GM12878 (cell line): ENCODE measurements at regions of chr1 and their contacts with region 1.

Region 1: DNA sequence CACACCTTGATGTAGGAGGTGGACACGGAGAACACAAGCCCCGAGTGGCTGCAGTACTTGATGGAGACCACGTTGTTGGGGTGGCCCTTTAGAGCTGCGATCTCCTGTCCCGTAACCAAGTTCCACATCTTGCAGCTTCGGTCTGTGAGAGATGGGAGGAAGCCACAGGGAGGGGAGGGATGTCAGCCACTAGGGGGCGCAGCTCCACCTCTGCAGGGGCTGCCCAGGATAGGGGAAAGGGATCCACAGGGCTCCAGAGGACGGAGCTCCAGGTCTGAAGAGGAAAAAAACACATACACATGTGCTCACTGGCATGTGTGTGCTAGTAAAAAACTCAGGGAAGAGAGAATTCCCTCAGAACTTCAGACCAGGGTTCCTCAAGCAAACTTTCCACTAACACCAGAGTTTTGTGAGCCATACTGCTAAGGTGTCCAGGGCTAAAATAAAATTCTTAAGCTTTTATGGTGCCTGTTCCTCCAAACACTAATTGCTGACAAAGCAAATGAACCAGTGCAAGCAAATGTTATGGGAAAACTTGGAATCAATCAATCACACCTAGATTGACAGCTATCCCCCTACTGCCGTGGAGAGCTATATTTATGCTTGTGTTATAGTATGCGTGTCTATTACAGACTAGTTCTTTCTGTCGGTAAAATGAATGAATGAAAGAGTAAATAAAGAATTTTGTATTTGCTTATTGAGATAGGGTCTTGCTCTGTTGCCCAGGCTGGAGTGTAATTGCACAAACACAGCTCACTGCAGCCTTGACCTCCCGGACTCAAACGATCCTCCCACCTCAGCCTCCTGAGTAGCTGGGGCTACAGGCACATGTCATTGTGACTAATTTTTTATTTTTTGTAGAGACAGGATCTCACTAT is 43.7 kb downstream of the KIF21B start:
- DNase-seq: no peak
- ATAC-seq: peak; percentile 89
- H3K4me3 ChIP-seq: no peak overlapping the region
- H3K27ac ChIP-seq: no peak overlapping the region
- H3K4me1 ChIP-seq: no peaks in the 10 kb centered on the region
- H3K27me3 ChIP-seq: no peaks in the 10 kb centered on the region
- CTCF ChIP-seq: peak; percentile 53 to 81 (median 79)
- EP300 ChIP-seq: no peak
- POLR2A ChIP-seq: no peak
- RAD21 ChIP-seq: peak; percentile 71

Region 2: GRCh38 chr1:200992382-200993048 is 12.7 kb after region 1 on chr1:
- CTCF ChIA-PET with region 1: interaction called, 14 read pairs
- POLR2A ChIA-PET with region 1: no interaction called
- RAD21 ChIA-PET with region 1: interaction called, 5 read pairs
- SMC1A ChIA-PET with region 1: interaction called, 3 read pairs
- in situ Hi-C with region 1: no loop called
- intact Hi-C with region 1: no loop called
- DNase-seq: no peak
- ATAC-seq: no peak
- H3K4me3 ChIP-seq: no peak overlapping the region
- H3K27ac ChIP-seq: no peak overlapping the region
- H3K4me1 ChIP-seq: no peaks in the 10 kb centered on the region
- H3K27me3 ChIP-seq: no peaks in the 10 kb centered on the region
- CTCF ChIP-seq: no peak
- EP300 ChIP-seq: no peak
- POLR2A ChIP-seq: no peak
- RAD21 ChIP-seq: no peak

Region 3: GRCh38 chr1:201016211-201016651 is 36.4 kb after region 1 on chr1:
- CTCF ChIA-PET with region 1: interaction called, 48 read pairs
- POLR2A ChIA-PET with region 1: no interaction called
- RAD21 ChIA-PET with region 1: interaction called, 239 read pairs
- SMC1A ChIA-PET with region 1: interaction called, 12 read pairs
- in situ Hi-C with region 1: no loop called
- intact Hi-C with region 1: no loop called
- DNase-seq: no peak
- ATAC-seq: no peak
- H3K4me3 ChIP-seq: no peak overlapping the region
- H3K27ac ChIP-seq: no peak overlapping the region
- H3K4me1 ChIP-seq: peaks cover 51% of the 10 kb centered on the region
- H3K27me3 ChIP-seq: no peaks in the 10 kb centered on the region
- CTCF ChIP-seq: no peak
- EP300 ChIP-seq: no peak
- POLR2A ChIP-seq: no peak
- RAD21 ChIP-seq: no peak

Region 4: DNA sequence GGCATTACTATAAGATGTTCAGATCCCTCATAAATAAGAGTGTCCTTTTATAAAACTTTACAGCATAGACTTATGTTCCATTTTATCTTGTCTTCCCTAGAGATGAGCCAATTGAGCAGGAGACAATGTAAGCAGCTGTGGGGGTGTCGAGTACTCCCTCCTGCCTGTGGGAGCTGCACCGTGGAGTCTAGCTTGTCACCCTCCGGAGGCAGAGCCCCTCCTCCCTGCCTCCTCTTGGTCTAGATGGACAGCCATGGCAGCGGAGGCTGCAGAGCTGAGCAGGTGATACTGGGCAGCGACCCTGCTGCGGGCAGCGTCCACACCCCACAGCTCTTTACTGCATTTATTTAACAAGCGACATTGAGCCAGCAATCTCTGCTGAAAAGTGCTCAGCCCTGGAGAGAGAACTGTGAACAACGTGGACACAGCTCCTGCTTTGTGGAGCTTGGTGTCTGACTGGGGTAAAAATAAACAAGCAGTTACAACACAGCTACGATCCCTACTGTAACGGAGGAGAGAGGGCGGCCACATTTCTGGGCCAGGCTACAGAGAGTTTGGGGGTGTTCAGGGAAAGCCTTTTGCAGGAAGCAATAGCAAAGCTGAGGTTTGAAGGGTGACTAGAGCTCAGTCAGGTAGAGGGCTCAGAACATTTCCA is 56.5 kb after region 1 on chr1:
- CTCF ChIA-PET with region 1: interaction called, 74 read pairs
- POLR2A ChIA-PET with region 1: no interaction called
- RAD21 ChIA-PET with region 1: interaction called, 19 read pairs
- SMC1A ChIA-PET with region 1: interaction called, 44 read pairs
- in situ Hi-C with region 1: loop called (anchors 5 kb)
- intact Hi-C with region 1: no loop called
- DNase-seq: no peak
- ATAC-seq: no peak
- H3K4me3 ChIP-seq: no peak overlapping the region
- H3K27ac ChIP-seq: no peak overlapping the region
- H3K4me1 ChIP-seq: no peaks in the 10 kb centered on the region
- H3K27me3 ChIP-seq: no peaks in the 10 kb centered on the region
- CTCF ChIP-seq: no peak
- EP300 ChIP-seq: no peak
- POLR2A ChIP-seq: no peak
- RAD21 ChIP-seq: no peak

Region 5: GRCh38 chr1:201042779-201043461 is 63.1 kb after region 1 on chr1:
- CTCF ChIA-PET with region 1: interaction called, 74 read pairs
- POLR2A ChIA-PET with region 1: interaction called, 9 read pairs
- RAD21 ChIA-PET with region 1: interaction called, 19 read pairs
- SMC1A ChIA-PET with region 1: interaction called, 44 read pairs
- in situ Hi-C with region 1: loop called (anchors 5 kb)
- intact Hi-C with region 1: loop called (anchors 1 kb)
- DNase-seq: no peak
- ATAC-seq: peak; percentile 97
- H3K4me3 ChIP-seq: no peak overlapping the region
- H3K27ac ChIP-seq: no peak overlapping the region
- H3K4me1 ChIP-seq: no peaks in the 10 kb centered on the region
- H3K27me3 ChIP-seq: no peaks in the 10 kb centered on the region; a peak in 1 of 4 replicates
- CTCF ChIP-seq: peak; percentile 87 to 94 (median 93); a peak in 5 of 6 replicates
- EP300 ChIP-seq: no peak
- POLR2A ChIP-seq: no peak
- RAD21 ChIP-seq: peak; percentile 99

Region 6: DNA sequence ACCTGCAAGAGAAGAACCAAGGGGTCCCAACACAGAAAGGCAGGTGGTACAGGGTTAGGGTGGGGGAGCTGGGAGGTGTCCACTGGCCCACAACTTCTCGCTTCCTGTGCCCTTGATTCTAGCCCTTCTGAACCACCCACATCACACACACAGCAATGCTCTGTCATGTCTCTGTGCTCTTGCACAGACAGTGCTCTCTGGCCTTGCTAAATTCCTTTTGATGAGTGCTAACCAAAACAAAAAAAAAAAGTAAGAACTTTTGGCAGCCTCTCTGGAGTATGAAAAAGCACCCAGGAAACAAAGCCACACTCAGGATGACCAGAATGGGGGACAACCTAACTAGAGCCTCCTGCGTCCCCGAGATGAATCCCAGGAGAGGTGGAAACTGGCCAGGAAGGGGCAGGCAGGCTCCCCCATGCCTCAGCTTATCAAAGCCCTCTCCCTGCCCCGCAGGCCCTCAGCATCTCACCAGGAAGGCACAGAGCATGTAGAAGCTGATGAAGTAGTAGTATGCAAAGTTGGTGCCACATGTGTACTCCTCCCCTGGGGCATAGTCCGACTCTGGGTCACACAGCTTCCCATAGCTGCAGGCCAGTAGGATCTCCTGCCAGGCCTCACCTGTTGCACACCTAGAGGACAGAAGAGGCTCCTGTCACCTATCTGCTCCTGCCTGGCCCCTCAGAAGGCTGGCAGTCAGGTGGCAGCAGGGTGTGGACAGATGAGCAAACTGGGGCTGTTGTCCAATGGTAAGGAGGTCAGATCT is 70.9 kb after region 1 on chr1:
- CTCF ChIA-PET with region 1: interaction called, 19 read pairs
- POLR2A ChIA-PET with region 1: interaction called, 9 read pairs
- RAD21 ChIA-PET with region 1: interaction called, 3 read pairs
- SMC1A ChIA-PET with region 1: interaction called, 10 read pairs
- in situ Hi-C with region 1: no loop called
- intact Hi-C with region 1: no loop called
- DNase-seq: no peak
- ATAC-seq: peak; percentile 22; the same call in 2 of the 3 replicates
- H3K4me3 ChIP-seq: no peak overlapping the region
- H3K27ac ChIP-seq: no peak overlapping the region
- H3K4me1 ChIP-seq: no peaks in the 10 kb centered on the region
- H3K27me3 ChIP-seq: peaks cover 5 to 7% of the 10 kb centered on the region in 2 experiments; a peak in 3 of 4 replicates
- CTCF ChIP-seq: no peak
- EP300 ChIP-seq: no peak
- POLR2A ChIP-seq: no peak
- RAD21 ChIP-seq: no peak

Region 7: GRCh38 chr1:201114236-201115131 is 134.7 kb after region 1 on chr1:
- CTCF ChIA-PET with region 1: interaction called, 9 read pairs
- POLR2A ChIA-PET with region 1: no interaction called
- RAD21 ChIA-PET with region 1: interaction called, 8 read pairs
- SMC1A ChIA-PET with region 1: interaction called, 5 read pairs
- in situ Hi-C with region 1: loop called (anchors 5 kb)
- intact Hi-C with region 1: loop called (anchors 2 kb)
- DNase-seq: peak; percentile 17
- ATAC-seq: peak; percentile 97
- H3K4me3 ChIP-seq: peak overlapping the region; percentile 47
- H3K27ac ChIP-seq: no peak overlapping the region
- H3K4me1 ChIP-seq: no peaks in the 10 kb centered on the region
- H3K27me3 ChIP-seq: peaks cover 3 to 8% of the 10 kb centered on the region in 2 experiments; a peak in 3 of 4 replicates
- CTCF ChIP-seq: peak; percentile 79 to 89 (median 85)
- EP300 ChIP-seq: no peak
- POLR2A ChIP-seq: no peak
- RAD21 ChIP-seq: peak; percentile 84